Activated CD4-positive, alpha-beta T cell treated with anti-CD3 and anti-CD28 coated beads, Interleukin-2, amount 10 ng/mL, durations not matched to agents 24 days and 14 days (primary cell): ENCODE measurements at regions of chr12 and their contacts with region 1.

Region 1: GRCh38 chr12:24719293-24719721 is 229.6 kb downstream of the BCAT1 start:
- DNase-seq: peak; percentile 78
- H3K4me3 Mint-ChIP-seq: peak overlapping the region; percentile 15
- H3K27ac Mint-ChIP-seq: peak overlapping the region; percentile 78
- H3K4me1 Mint-ChIP-seq: peaks cover 23% of the 10 kb centered on the region
- H3K27me3 Mint-ChIP-seq: no peaks in the 10 kb centered on the region

Region 2: DNA sequence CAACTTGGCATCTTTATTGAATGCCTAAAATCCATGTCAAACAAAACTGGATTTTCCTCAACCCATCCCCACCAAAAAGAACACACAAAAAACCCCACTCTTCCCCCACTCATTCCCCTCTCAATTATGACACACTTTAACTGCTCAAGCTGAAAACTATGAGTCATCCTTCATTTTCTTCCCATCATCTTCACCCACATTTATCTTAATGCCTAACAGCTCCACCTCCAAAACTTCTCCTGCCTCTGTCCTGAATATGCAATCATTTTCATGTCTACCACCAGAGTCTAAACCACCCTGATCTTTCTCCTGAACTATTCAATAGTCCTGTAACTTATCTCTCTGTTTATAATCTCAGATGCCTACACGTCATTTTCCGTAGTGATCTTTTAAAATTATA is 10.1 kb before region 1 on chr12:
- intact Hi-C with region 1: loop called (anchors 1 kb)
- DNase-seq: no peak
- H3K4me3 Mint-ChIP-seq: no peak overlapping the region
- H3K27ac Mint-ChIP-seq: no peak overlapping the region
- H3K4me1 Mint-ChIP-seq: peaks cover 10% of the 10 kb centered on the region
- H3K27me3 Mint-ChIP-seq: no peaks in the 10 kb centered on the region

Region 3: GRCh38 chr12:24754690-24755638 is 35.7 kb after region 1 on chr12:
- intact Hi-C with region 1: loop called (anchors 1 kb)
- DNase-seq: no peak
- H3K4me3 Mint-ChIP-seq: peak overlapping the region; percentile 15
- H3K27ac Mint-ChIP-seq: peak overlapping the region; percentile 85
- H3K4me1 Mint-ChIP-seq: peaks cover 19% of the 10 kb centered on the region
- H3K27me3 Mint-ChIP-seq: peaks cover 1% of the 10 kb centered on the region